OCI-LY7 (cell line): ENCODE measurements at regions of chr2 and their contacts with region 1.

Region 1: GRCh38 chr2:187574969-187575750 is 20.9 kb upstream of the TFPI start:
- DNase-seq: no peak
- H3K4me3 ChIP-seq: no peak overlapping the region
- H3K27ac ChIP-seq: no peak overlapping the region
- H3K4me1 ChIP-seq: no peaks in the 10 kb centered on the region
- CTCF ChIP-seq: no peak

Region 2: GRCh38 chr2:187499941-187500532 is 75.1 kb before region 1 on chr2:
- CTCF ChIA-PET with region 1: no interaction called
- POLR2A ChIA-PET with region 1: no interaction called
- intact Hi-C with region 1: loop called (anchors 5 kb)
- DNase-seq: peak; percentile 50
- H3K4me3 ChIP-seq: no peak overlapping the region
- H3K27ac ChIP-seq: no peak overlapping the region
- H3K4me1 ChIP-seq: no peaks in the 10 kb centered on the region
- CTCF ChIP-seq: peak; percentile 89